CD14-positive monocyte (primary cell): ENCODE measurements at regions of chr11 and their contacts with region 1.

Region 1: DNA sequence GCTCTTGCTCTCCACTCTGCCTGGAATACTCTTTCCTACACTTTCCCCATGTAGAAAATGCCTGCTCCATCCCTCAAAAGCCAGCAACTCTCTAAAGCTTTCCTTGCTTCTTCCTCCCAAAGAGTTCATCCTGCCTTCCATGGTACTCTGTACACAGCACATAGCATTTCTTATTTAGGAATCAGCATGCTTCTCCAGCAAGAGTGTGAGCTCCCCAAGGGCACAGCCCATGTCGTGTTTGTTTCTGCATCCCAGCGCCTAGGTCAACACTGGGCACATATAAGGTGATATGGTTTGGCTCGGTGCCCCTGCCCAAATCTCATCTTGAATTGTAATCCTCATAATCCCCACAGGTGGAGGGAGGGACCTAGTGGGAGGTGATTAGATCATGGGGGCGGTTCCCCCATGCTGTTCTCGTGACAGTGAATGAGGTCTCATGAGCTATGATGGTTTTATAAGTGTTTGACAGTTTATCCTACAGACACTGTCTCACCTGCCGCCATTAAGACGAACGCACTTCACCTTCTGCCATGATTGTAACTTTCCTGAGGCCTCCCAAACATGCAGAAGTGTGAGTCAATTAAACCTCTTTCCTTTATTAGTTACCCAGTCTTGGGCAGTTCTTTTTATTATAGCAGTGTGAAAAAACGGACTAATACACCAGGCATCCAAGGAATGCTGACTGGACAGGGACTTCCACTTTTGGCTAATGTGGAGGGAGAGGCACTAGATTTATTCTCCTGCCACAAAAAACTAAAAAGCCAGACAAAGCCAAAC is 8.2 kb downstream of the VPS37C start:
- DNase-seq: no peak
- H3K4me3 ChIP-seq: no peak overlapping the region
- H3K4me3 Mint-ChIP-seq: no peak overlapping the region
- H3K27ac ChIP-seq: no peak overlapping the region
- H3K27ac Mint-ChIP-seq: peak overlapping the region in 2 of 7 donors; percentile 20 to 48
- H3K4me1 ChIP-seq: peaks cover 15 to 30% of the 10 kb centered on the region in 2 donors
- H3K4me1 Mint-ChIP-seq: peaks cover 52% of the 10 kb centered on the region
- H3K27me3 ChIP-seq: no peaks in the 10 kb centered on the region
- H3K27me3 Mint-ChIP-seq: no peaks in the 10 kb centered on the region
- CTCF ChIP-seq: no peak

Region 2: DNA sequence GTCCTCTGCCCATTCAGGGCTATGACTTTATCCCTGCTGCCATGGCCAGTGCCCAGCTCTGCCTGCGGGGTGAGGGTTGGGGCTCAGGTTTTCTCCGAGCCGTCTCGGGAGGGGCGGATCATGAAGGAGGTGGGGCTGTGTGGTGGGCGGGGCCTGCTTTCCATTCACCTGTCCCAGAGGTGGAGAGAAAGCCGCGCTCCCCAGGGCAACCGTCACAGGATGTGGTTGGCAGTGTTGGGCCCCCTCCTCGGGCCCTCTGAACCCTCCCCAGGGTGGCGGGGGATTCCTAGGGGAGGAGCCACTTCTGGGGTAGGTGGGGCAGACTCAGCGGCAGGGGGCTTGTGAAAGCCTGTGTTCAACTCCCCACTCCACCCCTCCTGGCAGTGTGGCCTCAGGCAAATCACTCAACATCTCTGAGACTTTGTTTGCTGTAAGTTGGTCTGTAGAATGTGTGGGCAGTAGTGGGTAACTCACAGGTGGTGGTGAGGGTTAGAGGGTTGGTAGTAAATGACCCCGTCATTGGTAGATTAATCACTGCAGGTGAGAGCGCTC is 131.3 kb before region 1 on chr11:
- intact Hi-C with region 1: no loop called
- DNase-seq: no peak
- H3K4me3 ChIP-seq: no peak overlapping the region
- H3K4me3 Mint-ChIP-seq: peak overlapping the region in 1 of 2 donors; percentile 76
- H3K27ac ChIP-seq: no peak overlapping the region
- H3K27ac Mint-ChIP-seq: peak overlapping the region in 1 of 7 donors; percentile 64
- H3K4me1 ChIP-seq: peaks cover 18 to 22% of the 10 kb centered on the region in 2 donors
- H3K4me1 Mint-ChIP-seq: peaks cover 44% of the 10 kb centered on the region
- H3K27me3 ChIP-seq: peaks cover 8 to 25% of the 10 kb centered on the region in 2 donors
- H3K27me3 Mint-ChIP-seq: peaks cover 26 to 40% (median 28%) of the 10 kb centered on the region in 3 donors
- CTCF ChIP-seq: no peak

Region 3: GRCh38 chr11:61187505-61188130 is 34.6 kb after region 1 on chr11:
- intact Hi-C with region 1: loop called in 1 of 2 experiments (anchors 5 kb)
- DNase-seq: peak; percentile 72 to 87 (median 79)
- H3K4me3 ChIP-seq: no peak overlapping the region
- H3K4me3 Mint-ChIP-seq: no peak overlapping the region
- H3K27ac ChIP-seq: no peak overlapping the region
- H3K27ac Mint-ChIP-seq: peak overlapping the region in 3 of 7 donors; percentile 27 to 65 (median 63)
- H3K4me1 ChIP-seq: peaks cover 0 to 3% of the 10 kb centered on the region in 2 donors
- H3K4me1 Mint-ChIP-seq: peaks cover 16% of the 10 kb centered on the region
- H3K27me3 ChIP-seq: no peaks in the 10 kb centered on the region
- H3K27me3 Mint-ChIP-seq: peaks cover 0 to 1% (median 0%) of the 10 kb centered on the region in 3 donors
- CTCF ChIP-seq: peak; percentile 99